ENCODE measurements at regions of chr16 and their contacts with region 1.

Region 1: GRCh38 chr16:71214746-71215381 is 15.7 kb downstream of the HYDIN start:
- DNase-seq: peak in 1 of 2 experiments; percentile 18
- H3K4me3 ChIP-seq: no peak overlapping the region
- H3K4me3 Mint-ChIP-seq: no peak overlapping the region
- H3K27ac Mint-ChIP-seq: no peak overlapping the region
- H3K4me1 ChIP-seq: no peaks in the 10 kb centered on the region
- H3K4me1 Mint-ChIP-seq: no peaks in the 10 kb centered on the region
- H3K27me3 ChIP-seq: no peaks in the 10 kb centered on the region
- H3K27me3 Mint-ChIP-seq: peaks cover 12% of the 10 kb centered on the region
- CTCF ChIP-seq: peak; percentile 44 to 49

Region 2: DNA sequence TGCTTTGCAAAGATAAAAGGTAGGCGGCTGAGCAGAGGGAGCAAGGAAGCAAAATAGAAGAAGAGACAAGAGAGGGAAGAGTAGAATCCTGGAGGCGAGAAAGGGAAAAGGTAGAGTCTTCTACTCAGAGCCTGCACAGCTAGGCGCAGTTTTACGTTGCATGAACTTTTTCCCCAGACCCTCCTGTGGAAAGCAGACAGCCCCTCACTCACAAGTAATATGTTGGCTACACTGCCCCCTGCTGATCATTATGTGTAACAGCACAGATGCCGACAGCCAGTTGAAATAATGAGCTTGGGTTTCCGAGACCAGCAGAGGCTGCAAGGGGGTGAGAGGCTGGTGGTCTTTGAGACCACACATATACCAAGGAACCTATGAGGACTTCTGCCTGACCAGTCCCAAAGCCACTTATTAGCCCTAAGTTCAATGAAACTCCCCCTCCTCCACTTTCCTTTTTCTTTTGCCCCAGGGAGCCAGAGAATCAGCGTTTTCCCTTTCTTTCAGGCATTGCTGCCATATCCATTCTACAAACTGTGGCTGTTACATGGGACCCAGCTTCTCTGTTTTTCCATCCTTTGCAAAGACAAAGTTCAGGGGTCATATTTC is 96.8 kb after region 1 on chr16:
- CTCF ChIA-PET with region 1: interaction called, 24 read pairs
- POLR2A ChIA-PET with region 1: no interaction called
- intact Hi-C with region 1: loop called (anchors 1 kb)
- DNase-seq: peak in 1 of 2 experiments; percentile 54
- H3K4me3 ChIP-seq: no peak overlapping the region
- H3K4me3 Mint-ChIP-seq: no peak overlapping the region
- H3K27ac Mint-ChIP-seq: no peak overlapping the region
- H3K4me1 ChIP-seq: no peaks in the 10 kb centered on the region
- H3K4me1 Mint-ChIP-seq: no peaks in the 10 kb centered on the region
- H3K27me3 ChIP-seq: no peaks in the 10 kb centered on the region; the same call in 1 of the 2 replicates
- H3K27me3 Mint-ChIP-seq: peaks cover 9% of the 10 kb centered on the region
- CTCF ChIP-seq: peak; percentile 80 to 95

Region 3: GRCh38 chr16:71358464-71358998 is 143.7 kb after region 1 on chr16 and contains the start of gene CALB2:
- CTCF ChIA-PET with region 1: no interaction called
- POLR2A ChIA-PET with region 1: no interaction called
- intact Hi-C with region 1: loop called (anchors 1 kb)
- DNase-seq: peak; percentile 51 to 82
- H3K4me3 ChIP-seq: 0 out of 2 replicates have a peak within 1 kb of the TSS, but pooled peaks have one; percentile 11
- H3K4me3 Mint-ChIP-seq: peak within 1 kb of the TSS; percentile 56
- H3K27ac Mint-ChIP-seq: no peak within 1 kb of the TSS
- H3K4me1 ChIP-seq: no peaks in the 10 kb centered on the region
- H3K4me1 Mint-ChIP-seq: no peaks in the 10 kb centered on the region
- H3K27me3 ChIP-seq: peaks cover 2% of the 10 kb centered on the region
- H3K27me3 Mint-ChIP-seq: peaks cover 17% of the 10 kb centered on the region
- CTCF ChIP-seq: peak; percentile 84 to 98
- total RNA-seq, gene CALB2: 0.65 TPM in 1 of 2 replicates, not detected in the other

Region 4: GRCh38 chr16:71610936-71611871 is 396.3 kb after region 1 on chr16:
- CTCF ChIA-PET with region 1: no interaction called
- POLR2A ChIA-PET with region 1: no interaction called
- intact Hi-C with region 1: no loop called
- DNase-seq: peak; percentile 86 to 94
- H3K4me3 ChIP-seq: no peak overlapping the region
- H3K4me3 Mint-ChIP-seq: no peak overlapping the region
- H3K27ac Mint-ChIP-seq: no peak overlapping the region
- H3K4me1 ChIP-seq: no peaks in the 10 kb centered on the region
- H3K4me1 Mint-ChIP-seq: no peaks in the 10 kb centered on the region
- H3K27me3 ChIP-seq: no peaks in the 10 kb centered on the region
- H3K27me3 Mint-ChIP-seq: peaks cover 3% of the 10 kb centered on the region
- CTCF ChIP-seq: peak; percentile 99 to 100